Astrocyte of the cerebellum (primary cell): ENCODE measurements at regions of chr20 and their contacts with region 1.

Region 1: DNA sequence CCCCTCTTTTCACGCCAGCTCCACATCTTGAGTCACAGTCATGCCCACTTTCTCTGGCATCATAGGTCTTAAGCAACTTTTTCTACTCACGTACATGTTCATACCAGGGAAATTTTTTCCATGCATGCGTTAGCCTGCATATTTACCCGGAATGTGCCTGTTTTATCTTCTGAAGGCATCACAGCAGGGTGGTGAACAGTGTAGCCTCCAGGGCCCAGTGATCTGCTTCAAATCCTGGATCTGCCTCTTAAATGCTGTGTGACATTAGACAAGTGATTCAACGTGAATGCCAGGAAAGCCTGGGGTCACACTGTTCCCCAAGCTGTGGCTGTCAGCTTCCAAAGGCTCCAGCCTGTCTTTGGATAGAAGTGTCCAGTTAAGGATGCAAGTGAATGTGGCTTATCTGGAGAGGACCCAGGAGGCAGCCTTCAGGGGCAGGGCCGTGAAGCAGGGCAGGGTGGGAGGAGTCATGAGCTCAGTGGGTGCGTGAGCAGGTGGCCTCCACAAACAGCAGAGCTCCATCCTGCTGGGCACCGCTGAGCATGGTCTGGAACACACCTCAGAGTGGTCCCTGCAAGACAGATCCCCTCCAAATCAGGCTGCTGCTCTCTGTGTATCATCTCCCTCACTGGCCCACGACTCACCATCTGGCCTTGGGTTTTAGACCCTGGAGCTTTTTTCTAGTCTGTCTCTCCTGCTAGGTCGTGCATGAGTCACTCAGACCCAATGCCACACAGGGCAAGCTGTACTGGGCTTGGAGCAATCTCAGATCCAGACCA is 30.4 kb upstream of the CD93 start:
- DNase-seq: no peak
- H3K4me3 ChIP-seq: no peak overlapping the region
- CTCF ChIP-seq: no peak

Region 2: DNA sequence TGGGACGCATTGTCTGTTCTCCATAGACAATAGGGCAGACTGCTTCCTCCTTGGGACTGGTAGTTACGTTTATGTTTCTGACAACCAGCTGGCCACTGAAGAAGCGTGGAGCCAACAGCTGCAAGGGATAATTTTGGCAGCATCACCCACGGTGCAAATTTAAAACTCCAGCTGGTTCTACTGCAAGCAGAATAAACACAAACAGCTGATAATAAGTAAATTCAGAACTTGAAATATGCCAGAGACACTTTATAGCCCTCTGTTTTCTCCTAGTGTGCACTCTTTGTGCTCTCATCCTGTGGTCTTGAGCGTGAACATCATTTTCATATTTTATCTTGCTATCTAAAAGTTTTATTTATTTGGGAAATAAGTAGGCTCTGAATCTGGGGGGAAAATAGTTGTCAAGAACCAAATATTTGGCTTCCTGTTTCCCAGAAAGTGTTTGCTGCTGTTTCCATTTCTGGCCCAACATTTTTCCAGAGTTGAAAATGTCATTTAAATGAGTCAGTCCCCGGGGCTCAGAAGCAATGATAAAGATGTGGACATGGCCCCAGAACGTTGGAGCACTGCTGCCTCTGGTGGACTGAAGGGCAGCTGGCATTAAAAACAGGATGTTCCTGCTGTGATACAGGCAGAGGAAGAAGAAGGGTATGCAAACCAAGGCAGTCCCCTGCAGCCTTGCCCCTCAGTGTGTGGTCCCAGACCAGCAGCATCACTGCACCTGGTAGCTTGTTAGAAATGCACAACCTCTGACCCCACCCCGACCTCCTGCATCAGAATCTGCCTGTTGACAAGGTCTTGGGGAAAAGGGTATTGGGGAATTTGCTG is 54.6 kb before region 1 on chr20:
- in situ Hi-C with region 1: loop called (anchors 5 kb)
- DNase-seq: no peak
- H3K4me3 ChIP-seq: no peak overlapping the region
- CTCF ChIP-seq: peak; percentile 51

Region 3: DNA sequence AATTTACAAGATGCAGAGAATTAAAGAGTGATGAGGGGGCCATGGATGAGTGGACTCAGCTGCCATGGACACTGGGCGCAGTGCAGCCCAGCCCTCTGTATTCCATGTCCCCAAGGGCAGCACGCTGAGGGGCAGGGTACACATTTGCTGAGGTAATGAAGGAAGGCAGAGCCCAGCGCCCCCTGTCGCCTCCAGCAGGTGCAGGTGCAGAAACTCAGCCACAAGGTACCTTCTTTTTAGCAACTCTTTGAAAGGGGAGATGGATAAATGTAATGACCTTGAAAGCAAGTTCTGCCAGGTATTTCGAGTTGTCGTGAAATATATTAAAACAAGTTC is 37.5 kb before region 1 on chr20:
- in situ Hi-C with region 1: no loop called
- DNase-seq: no peak
- H3K4me3 ChIP-seq: no peak overlapping the region
- CTCF ChIP-seq: peak; percentile 22